ENCODE measurements at regions of chr1 and their contacts with region 1.

Region 1: GRCh38 chr1:223811634-223812415 is 33.9 kb downstream of the TP53BP2 start:
- H3K4me3 ChIP-seq: no peak overlapping the region
- H3K27ac ChIP-seq: no peak overlapping the region
- H3K4me1 ChIP-seq: no peaks in the 10 kb centered on the region
- CTCF ChIP-seq: peak; percentile 63; the same call in 1 of the 2 replicates

Region 2: DNA sequence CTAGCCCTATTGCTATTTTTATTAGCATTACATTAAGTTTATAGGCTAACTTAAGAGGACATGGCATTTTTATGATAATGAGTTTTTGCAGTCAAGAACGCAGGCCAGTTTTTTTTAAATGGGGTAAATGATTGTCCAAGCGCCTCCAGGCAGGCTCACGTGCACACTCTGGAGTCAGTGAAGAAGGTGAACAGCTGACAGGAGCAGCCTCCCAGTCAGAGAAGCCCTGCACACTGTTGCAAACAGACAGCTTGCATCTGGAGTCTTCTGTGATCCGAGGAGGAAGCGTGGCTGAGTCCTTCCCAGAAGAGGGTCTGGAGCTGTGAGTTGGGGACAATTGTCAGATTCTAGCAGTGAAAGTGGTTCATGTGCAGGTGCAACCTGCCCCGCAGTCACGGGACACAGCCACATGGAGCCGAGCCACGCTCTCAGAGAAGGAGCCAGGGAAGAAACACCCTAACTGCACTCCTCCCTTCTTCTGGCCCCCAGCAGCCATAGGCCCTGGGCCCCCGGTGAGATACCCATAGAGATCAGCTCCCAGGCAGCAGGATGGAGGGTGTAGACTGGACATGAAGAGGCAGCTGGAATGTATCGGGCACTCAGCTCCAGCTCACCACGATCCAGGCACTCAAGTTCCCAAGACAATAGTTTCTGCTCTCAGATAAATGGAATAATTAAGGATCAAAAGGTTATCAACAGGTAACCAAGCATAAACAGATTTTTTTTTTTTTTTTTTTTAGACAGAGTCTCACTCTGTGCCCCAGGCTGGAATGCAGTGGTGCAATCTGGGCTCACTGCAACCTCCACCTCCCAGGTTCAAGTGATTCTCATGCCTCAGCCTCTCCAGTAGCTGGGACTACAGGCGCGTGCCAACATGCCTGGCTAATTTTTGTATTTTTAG is 73.1 kb before region 1 on chr1:
- CTCF ChIA-PET with region 1: no interaction called
- POLR2A ChIA-PET with region 1: no interaction called
- H3K4me3 ChIP-seq: no peak overlapping the region
- H3K27ac ChIP-seq: no peak overlapping the region
- H3K4me1 ChIP-seq: peaks cover 26% of the 10 kb centered on the region
- CTCF ChIP-seq: peak; percentile 19; the same call in 1 of the 2 replicates

Region 3: GRCh38 chr1:223825767-223826748 is 14.2 kb after region 1 on chr1:
- CTCF ChIA-PET with region 1: interaction called, 12 read pairs
- POLR2A ChIA-PET with region 1: no interaction called
- H3K4me3 ChIP-seq: no peak overlapping the region
- H3K27ac ChIP-seq: no peak overlapping the region
- H3K4me1 ChIP-seq: peaks cover 14% of the 10 kb centered on the region
- CTCF ChIP-seq: no peak

Region 4: GRCh38 chr1:223834660-223835263 is 22.9 kb after region 1 on chr1:
- CTCF ChIA-PET with region 1: interaction called, 13 read pairs
- POLR2A ChIA-PET with region 1: no interaction called
- H3K4me3 ChIP-seq: no peak overlapping the region
- H3K27ac ChIP-seq: no peak overlapping the region
- H3K4me1 ChIP-seq: peaks cover 44% of the 10 kb centered on the region
- CTCF ChIP-seq: no peak